GM12878 (cell line): ENCODE measurements at regions of chrX and their contacts with region 1.

Region 1: DNA sequence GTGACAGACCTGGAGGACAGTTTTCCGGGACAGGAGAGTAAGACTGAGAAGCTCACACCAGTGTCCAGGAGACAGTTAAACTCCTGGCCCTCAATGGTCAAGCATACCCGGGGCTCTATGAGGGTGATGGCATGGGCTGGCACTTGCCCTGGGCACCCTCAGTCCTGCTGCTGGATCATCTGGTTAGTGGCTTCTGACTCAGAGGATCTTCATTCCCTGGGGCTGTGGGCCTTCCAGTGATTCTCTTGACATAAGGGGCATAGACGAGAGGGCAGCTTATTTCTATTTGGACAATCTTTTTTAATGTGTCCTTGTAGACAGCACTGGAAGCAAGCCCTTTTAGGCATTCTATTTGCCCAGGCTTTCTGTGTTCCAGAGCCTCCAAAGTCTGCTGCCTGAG is 19.4 kb upstream of the CYSLTR1 start:
- DNase-seq: no peak
- ATAC-seq: no peak
- H3K4me3 ChIP-seq: no peak overlapping the region
- H3K27ac ChIP-seq: no peak overlapping the region
- H3K4me1 ChIP-seq: no peaks in the 10 kb centered on the region
- H3K27me3 ChIP-seq: no peaks in the 10 kb centered on the region
- CTCF ChIP-seq: no peak
- EP300 ChIP-seq: no peak
- POLR2A ChIP-seq: no peak
- RAD21 ChIP-seq: no peak

Region 2: DNA sequence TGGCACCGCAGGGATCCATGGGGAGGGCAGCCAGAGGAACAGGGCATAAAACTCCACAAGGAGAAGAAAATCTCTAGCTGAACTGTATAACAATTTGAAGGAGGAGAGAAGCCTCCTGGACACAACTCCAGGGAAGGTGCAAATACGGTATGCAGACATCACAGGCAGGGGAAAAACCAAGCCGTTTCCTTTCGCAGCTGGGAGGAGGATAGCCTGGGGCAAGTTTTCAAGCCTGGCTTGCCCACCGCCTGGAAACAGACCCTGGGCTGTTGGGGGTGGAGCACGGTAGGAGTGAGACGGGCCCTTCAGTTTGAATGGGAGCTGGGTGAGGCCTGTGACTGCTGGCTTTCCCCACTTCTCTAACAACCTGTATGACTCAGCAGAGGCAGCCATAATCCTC is 163.9 kb before region 1 on chrX:
- CTCF ChIA-PET with region 1: no interaction called
- POLR2A ChIA-PET with region 1: no interaction called
- RAD21 ChIA-PET with region 1: no interaction called
- SMC1A ChIA-PET with region 1: no interaction called
- in situ Hi-C with region 1: no loop called
- intact Hi-C with region 1: no loop called
- DNase-seq: no peak
- ATAC-seq: no peak
- H3K4me3 ChIP-seq: no peak overlapping the region
- H3K27ac ChIP-seq: no peak overlapping the region
- H3K4me1 ChIP-seq: no peaks in the 10 kb centered on the region
- H3K27me3 ChIP-seq: no peaks in the 10 kb centered on the region
- CTCF ChIP-seq: no peak
- EP300 ChIP-seq: no peak
- POLR2A ChIP-seq: no peak
- RAD21 ChIP-seq: no peak

Region 3: DNA sequence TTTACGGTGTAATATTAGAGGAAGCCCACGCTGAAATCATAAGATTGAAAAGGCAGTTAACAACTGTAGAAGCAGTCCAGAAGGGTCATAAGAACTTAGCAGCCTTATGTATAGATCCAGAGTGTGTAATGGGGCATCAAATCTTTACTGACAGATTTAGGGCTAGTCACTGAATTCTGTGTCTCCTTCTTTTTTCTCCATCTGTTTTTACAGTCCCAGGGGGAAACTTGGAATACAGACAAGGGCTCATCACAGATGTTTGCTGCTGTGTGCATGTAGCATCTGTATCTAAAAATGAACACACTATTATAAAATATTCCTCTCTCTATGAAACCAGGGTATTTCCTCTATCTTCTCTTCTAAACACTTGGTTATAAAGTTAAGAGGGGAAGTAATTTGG is 63.3 kb before region 1 on chrX:
- CTCF ChIA-PET with region 1: no interaction called
- POLR2A ChIA-PET with region 1: no interaction called
- RAD21 ChIA-PET with region 1: no interaction called
- SMC1A ChIA-PET with region 1: no interaction called
- in situ Hi-C with region 1: loop called (anchors 10 kb)
- intact Hi-C with region 1: no loop called
- DNase-seq: no peak
- ATAC-seq: no peak
- H3K4me3 ChIP-seq: no peak overlapping the region
- H3K27ac ChIP-seq: no peak overlapping the region
- H3K4me1 ChIP-seq: no peaks in the 10 kb centered on the region
- H3K27me3 ChIP-seq: no peaks in the 10 kb centered on the region
- CTCF ChIP-seq: no peak
- EP300 ChIP-seq: no peak
- POLR2A ChIP-seq: no peak
- RAD21 ChIP-seq: no peak

Region 4: GRCh38 chrX:78493180-78493579 is 146.4 kb after region 1 on chrX:
- CTCF ChIA-PET with region 1: no interaction called
- POLR2A ChIA-PET with region 1: no interaction called
- RAD21 ChIA-PET with region 1: no interaction called
- SMC1A ChIA-PET with region 1: no interaction called
- in situ Hi-C with region 1: no loop called
- intact Hi-C with region 1: no loop called
- DNase-seq: no peak
- ATAC-seq: peak; percentile 67
- H3K4me3 ChIP-seq: no peak overlapping the region
- H3K27ac ChIP-seq: no peak overlapping the region
- H3K4me1 ChIP-seq: no peaks in the 10 kb centered on the region
- H3K27me3 ChIP-seq: no peaks in the 10 kb centered on the region
- CTCF ChIP-seq: no peak
- EP300 ChIP-seq: no peak
- POLR2A ChIP-seq: no peak
- RAD21 ChIP-seq: no peak